PC-9 (cell line): ENCODE measurements at regions of chr10 and their contacts with region 1.

Region 1: DNA sequence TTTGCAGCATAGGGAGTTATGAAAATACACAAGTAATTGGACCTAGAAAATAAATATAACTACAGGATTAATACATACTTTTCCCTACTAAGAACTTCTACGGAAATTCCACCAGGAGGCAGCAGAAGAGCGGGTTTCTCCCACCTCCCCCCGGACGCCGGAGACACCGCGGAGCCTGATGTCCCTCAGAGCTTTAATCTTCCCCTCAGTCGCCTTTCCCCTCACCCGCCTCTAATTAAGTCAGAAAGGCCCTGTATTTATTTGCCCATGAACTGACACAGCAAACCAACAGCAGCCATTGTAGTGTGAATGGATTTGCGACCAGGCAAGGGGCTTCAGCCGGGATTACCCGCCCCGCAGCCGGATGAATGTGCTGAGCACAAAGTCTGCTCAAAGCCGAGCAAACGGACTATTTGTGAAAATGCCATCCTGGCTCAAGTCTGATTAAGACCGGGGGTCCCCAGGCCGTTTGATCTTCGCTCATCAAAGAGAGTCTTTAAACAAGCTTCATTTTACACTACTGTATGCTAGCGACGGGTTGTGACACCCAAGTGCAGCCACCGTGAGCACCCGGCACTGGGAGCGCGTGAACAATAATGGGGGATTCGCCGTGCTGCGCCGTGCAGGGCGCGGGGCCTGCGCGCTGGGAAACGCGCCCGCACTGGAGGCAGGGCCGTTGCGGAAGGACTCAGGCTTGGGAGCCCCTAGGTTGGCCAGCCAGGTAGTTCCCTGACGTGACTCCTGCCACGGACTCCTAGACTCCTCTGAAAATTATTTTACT is 5.6 kb upstream of the DKK1 start:
- DNase-seq: peak in 1 of 2 experiments; percentile 64
- H3K4me3 ChIP-seq: no peak overlapping the region; the same call in 1 of the 2 replicates
- H3K27ac ChIP-seq: no peak overlapping the region
- H3K4me1 ChIP-seq: peaks cover 12% of the 10 kb centered on the region
- H3K27me3 ChIP-seq: no peaks in the 10 kb centered on the region
- CTCF ChIP-seq: peak; percentile 85

Region 2: GRCh38 chr10:52488606-52489485 is 180.4 kb after region 1 on chr10:
- CTCF ChIA-PET with region 1: interaction called, 21 read pairs
- POLR2A ChIA-PET with region 1: no interaction called
- intact Hi-C with region 1: loop called (anchors 1 kb)
- DNase-seq: peak in 1 of 2 experiments; percentile 10
- H3K4me3 ChIP-seq: no peak overlapping the region
- H3K27ac ChIP-seq: no peak overlapping the region
- H3K4me1 ChIP-seq: peaks cover 23% of the 10 kb centered on the region
- H3K27me3 ChIP-seq: no peaks in the 10 kb centered on the region
- CTCF ChIP-seq: peak; percentile 92

Region 3: GRCh38 chr10:52566471-52567246 is 258.2 kb after region 1 on chr10:
- CTCF ChIA-PET with region 1: interaction called, 15 read pairs
- POLR2A ChIA-PET with region 1: interaction called, 3 read pairs
- intact Hi-C with region 1: loop called (anchors 1 kb)
- DNase-seq: peak; percentile 25 to 60
- H3K4me3 ChIP-seq: no peak overlapping the region
- H3K27ac ChIP-seq: no peak overlapping the region
- H3K4me1 ChIP-seq: peaks cover 7% of the 10 kb centered on the region
- H3K27me3 ChIP-seq: no peaks in the 10 kb centered on the region
- CTCF ChIP-seq: peak; percentile 78

Region 4: DNA sequence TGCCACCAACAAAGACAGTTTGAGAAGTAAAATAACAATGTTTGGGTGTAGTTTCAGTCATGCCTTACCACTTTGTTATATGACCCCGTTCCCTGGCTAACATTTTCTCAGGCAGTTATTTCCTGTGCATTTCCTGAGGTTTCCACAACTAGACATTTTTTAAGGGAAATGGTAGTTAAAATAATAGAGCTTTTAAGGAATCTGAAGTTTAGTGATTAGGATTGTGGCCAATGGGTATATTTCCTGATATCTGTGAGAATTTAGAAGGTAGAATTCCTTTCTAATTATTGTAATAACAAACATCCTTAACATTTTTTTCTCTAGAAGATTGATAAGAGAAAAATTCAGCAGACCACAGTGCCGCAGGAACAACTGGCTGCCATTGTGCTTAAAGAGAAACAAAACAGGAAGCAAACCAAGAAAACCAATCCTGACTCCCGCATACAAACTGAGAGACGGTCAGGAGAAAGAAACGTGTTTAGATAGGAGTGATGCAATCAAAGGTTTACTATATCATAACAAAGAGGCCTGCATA is 270.5 kb after region 1 on chr10:
- CTCF ChIA-PET with region 1: no interaction called
- POLR2A ChIA-PET with region 1: interaction called, 12 read pairs
- intact Hi-C with region 1: no loop called
- DNase-seq: no peak
- H3K4me3 ChIP-seq: no peak overlapping the region
- H3K27ac ChIP-seq: no peak overlapping the region
- H3K4me1 ChIP-seq: no peaks in the 10 kb centered on the region
- H3K27me3 ChIP-seq: no peaks in the 10 kb centered on the region
- CTCF ChIP-seq: no peak

Region 5: GRCh38 chr10:52729271-52730104 is 421.0 kb after region 1 on chr10:
- CTCF ChIA-PET with region 1: interaction called, 4 read pairs
- POLR2A ChIA-PET with region 1: no interaction called
- intact Hi-C with region 1: loop called (anchors 1 kb)
- DNase-seq: peak in 1 of 2 experiments; percentile 47
- H3K4me3 ChIP-seq: no peak overlapping the region
- H3K27ac ChIP-seq: no peak overlapping the region
- H3K4me1 ChIP-seq: no peaks in the 10 kb centered on the region
- H3K27me3 ChIP-seq: no peaks in the 10 kb centered on the region
- CTCF ChIP-seq: peak; percentile 89

Region 6: GRCh38 chr10:52779541-52780390 is 471.3 kb after region 1 on chr10:
- CTCF ChIA-PET with region 1: interaction called, 3 read pairs
- POLR2A ChIA-PET with region 1: no interaction called
- intact Hi-C with region 1: loop called (anchors 1 kb)
- DNase-seq: peak in 1 of 2 experiments; percentile 73
- H3K4me3 ChIP-seq: no peak overlapping the region
- H3K27ac ChIP-seq: no peak overlapping the region
- H3K4me1 ChIP-seq: no peaks in the 10 kb centered on the region
- H3K27me3 ChIP-seq: no peaks in the 10 kb centered on the region
- CTCF ChIP-seq: peak; percentile 99